PC-9 (cell line): ENCODE measurements at regions of chr18 and their contacts with region 1.

Region 1: DNA sequence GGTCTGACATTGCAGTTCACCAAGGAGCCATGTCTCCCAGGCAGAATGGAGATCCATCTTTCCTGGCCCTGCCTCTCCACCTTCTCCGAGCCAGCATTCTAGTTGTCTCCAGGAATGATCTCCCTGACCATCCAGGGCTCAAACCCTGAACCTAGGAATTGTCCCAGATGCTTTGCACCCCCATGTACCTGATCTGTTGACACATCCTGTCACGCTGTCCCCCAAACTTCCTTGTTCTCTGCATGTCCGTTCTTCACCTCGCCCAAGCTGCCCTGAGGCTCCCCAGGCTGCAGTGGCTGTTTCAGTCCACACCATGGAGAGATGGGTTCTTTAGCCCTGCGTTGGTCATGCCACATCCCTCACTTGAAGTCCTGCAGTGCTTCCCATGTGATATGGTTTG is 7.0 kb upstream of the MBP start:
- DNase-seq: no peak
- H3K4me3 ChIP-seq: no peak overlapping the region
- H3K27ac ChIP-seq: no peak overlapping the region
- H3K4me1 ChIP-seq: no peaks in the 10 kb centered on the region
- H3K27me3 ChIP-seq: no peaks in the 10 kb centered on the region
- CTCF ChIP-seq: no peak

Region 2: GRCh38 chr18:76982841-76983587 is 156.6 kb before region 1 on chr18:
- CTCF ChIA-PET with region 1: no interaction called
- POLR2A ChIA-PET with region 1: interaction called, 12 read pairs
- intact Hi-C with region 1: no loop called
- DNase-seq: peak; percentile 69 to 76
- H3K4me3 ChIP-seq: no peak overlapping the region
- H3K27ac ChIP-seq: no peak overlapping the region
- H3K4me1 ChIP-seq: no peaks in the 10 kb centered on the region
- H3K27me3 ChIP-seq: no peaks in the 10 kb centered on the region
- CTCF ChIP-seq: peak; percentile 92

Region 3: DNA sequence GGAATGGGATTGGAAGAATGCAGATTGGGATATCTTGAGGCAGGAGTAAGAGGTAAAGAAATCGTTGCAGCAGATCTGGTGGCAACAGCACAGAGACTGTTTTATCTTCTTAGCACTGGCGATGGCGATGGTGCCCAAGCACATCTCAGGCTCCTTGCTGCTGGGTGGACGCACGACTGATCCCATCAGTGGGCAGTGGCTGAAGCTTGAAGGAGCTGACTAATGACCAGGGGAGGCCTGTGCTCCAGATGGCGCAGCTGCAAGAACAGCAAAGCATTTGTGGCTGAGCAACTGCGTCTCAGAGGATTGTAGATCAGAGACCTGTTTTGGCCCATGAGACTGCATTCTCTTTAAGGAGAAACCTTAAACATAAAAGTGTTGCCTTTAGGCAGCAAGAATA is 164.6 kb after region 1 on chr18:
- CTCF ChIA-PET with region 1: no interaction called
- POLR2A ChIA-PET with region 1: no interaction called
- intact Hi-C with region 1: no loop called
- DNase-seq: no peak
- H3K4me3 ChIP-seq: no peak overlapping the region
- H3K27ac ChIP-seq: no peak overlapping the region
- H3K4me1 ChIP-seq: no peaks in the 10 kb centered on the region
- H3K27me3 ChIP-seq: peaks cover 93% of the 10 kb centered on the region
- CTCF ChIP-seq: no peak